Adrenal gland (tissue), 19 donors: ENCODE measurements at regions of chr19 and their contacts with region 1.

Region 1: GRCh38 chr19:27974082-27974513 is 1238.9 kb downstream of the UQCRFS1 start:
- DNase-seq: peak; percentile 42 to 62 (median 52)
- H3K4me3 ChIP-seq: no peak overlapping the region
- H3K27ac ChIP-seq: no peak overlapping the region
- H3K4me1 ChIP-seq: no peaks in the 10 kb centered on the region
- H3K27me3 ChIP-seq: no peaks in the 10 kb centered on the region
- CTCF ChIP-seq: peak; percentile 50 to 81 (median 72)
- POLR2A ChIP-seq: no peak

Region 2: DNA sequence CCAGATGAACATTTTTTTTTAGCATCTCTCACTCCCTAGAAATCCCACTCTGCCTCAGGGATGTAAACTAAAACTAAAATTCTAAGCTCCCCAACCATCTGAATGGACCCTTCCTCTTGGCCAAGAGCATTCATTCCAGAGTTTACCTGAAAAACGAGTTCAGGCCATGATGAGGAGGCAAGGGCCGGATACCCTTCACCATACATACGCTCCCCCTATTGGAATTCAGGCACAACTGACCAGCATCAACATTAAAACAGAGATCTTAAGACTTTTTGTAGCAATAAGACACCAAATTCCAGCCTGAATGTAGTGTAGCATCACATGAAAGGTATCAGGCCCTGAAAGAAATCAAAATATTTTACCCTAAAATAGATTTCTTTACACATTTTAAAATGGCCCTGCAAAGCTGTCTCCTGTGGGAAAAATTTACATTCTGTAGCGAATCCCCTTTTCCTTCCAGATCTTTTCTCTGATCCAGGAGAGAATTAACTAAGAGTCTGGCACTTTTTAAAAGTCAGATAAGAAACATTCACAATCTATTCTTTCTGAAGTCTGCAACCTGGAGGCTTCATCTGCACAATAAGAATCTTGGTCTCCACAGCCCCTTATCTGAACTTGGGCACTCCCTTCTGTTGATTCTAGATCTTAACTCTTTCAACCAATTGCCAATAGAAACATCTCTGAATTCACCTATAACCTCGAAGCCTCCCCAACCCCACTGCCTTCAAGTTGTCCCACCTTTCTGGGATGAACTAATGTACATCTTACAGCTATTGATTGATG is 350.4 kb after region 1 on chr19:
- intact Hi-C with region 1: loop called (anchors 2 to 5 kb)
- DNase-seq: no peak
- H3K4me3 ChIP-seq: no peak overlapping the region
- H3K27ac ChIP-seq: no peak overlapping the region
- H3K4me1 ChIP-seq: no peaks in the 10 kb centered on the region
- H3K27me3 ChIP-seq: no peaks in the 10 kb centered on the region
- CTCF ChIP-seq: no peak
- POLR2A ChIP-seq: no peak